ENCODE measurements at regions of chr17 and their contacts with region 1.

Region 1: DNA sequence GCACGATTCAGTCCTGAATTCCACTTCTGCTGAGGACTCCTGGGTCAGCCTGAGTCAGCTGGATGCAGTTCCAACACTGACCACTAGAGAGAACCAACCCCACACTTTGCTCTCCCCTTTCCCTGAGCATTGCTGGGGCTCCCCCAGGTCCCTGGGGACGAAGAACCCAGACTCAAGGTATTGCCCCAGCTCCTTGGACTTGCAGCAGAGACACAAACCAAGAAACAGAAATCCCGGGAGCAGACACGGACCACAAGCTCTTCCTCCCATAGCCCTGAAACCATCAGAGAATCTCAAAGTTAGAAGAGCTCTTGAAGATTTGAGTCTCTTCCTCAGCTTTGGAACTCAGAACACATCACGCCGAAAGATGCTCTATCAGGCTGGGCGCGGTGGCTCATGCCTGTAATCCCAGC is 678 bp upstream of the GH1 start:
- DNase-seq: peak; percentile 83
- H3K27ac ChIP-seq: no peak overlapping the region
- CTCF ChIP-seq: peak; percentile 95

Region 2: DNA sequence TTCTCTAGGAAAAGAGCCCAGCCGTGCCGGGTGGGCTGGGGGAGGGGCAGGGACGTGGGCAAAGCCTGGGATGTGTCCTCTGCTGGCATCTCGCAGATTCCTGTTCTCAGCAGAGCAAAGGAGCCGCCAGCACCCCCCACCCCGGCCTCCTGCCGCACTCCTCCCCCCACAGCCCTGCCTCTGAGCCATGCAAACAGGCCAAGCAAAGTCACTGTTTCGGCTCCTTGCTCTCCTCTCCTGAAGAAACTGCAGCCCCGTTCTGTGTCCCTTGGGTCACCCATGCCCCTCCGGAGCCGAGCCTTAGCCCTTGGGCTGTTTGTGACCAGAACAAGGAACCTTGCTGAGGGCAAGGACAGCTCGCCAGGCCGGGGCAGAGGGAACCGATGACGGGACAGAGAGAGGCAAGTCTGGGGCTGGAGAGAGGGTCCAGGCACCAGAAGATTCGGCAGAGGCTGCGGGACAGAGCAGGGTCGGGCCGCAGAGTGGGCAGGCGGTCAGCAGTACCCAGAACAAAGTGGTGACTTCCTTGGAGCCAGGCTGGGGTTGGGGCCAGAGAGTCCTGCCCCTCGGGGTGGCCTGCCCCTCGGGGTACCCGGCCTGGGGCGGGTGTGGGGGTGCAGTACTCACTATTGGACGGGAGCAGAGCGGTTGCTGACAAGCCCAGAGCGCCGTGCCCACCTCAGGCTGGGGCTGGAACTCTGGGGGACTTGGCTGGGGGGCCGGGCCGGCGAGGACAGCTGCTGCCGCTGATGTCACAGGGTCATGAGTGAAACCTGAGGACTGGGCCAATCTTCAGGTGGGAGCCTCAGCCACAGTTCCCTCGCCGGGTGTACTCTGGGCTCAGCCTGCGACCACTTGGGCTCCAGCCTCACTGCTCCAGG is 69.7 kb after region 1 on chr17:
- CTCF ChIA-PET with region 1: interaction called, 15 read pairs
- POLR2A ChIA-PET with region 1: no interaction called
- DNase-seq: no peak
- H3K27ac ChIP-seq: no peak overlapping the region
- CTCF ChIP-seq: no peak

Measured in RWPE1 (cell line).